Activated CD4-positive, alpha-beta T cell treated with anti-CD3 and anti-CD28 coated beads, Interleukin-2, amount 10 ng/mL, durations not matched to agents 24 days and 14 days (primary cell): ENCODE measurements at regions of chr4 and their contacts with region 1.

Region 1: GRCh38 chr4:76504613-76505465 is 69.8 kb downstream of the SHROOM3 start:
- DNase-seq: peak; percentile 59
- H3K4me3 Mint-ChIP-seq: no peak overlapping the region
- H3K27ac Mint-ChIP-seq: no peak overlapping the region
- H3K4me1 Mint-ChIP-seq: no peaks in the 10 kb centered on the region
- H3K27me3 Mint-ChIP-seq: peaks cover 12% of the 10 kb centered on the region

Region 2: GRCh38 chr4:76179398-76180318 is 325.2 kb before region 1 on chr4:
- intact Hi-C with region 1: loop called (anchors 1 kb)
- DNase-seq: peak; percentile 93
- H3K4me3 Mint-ChIP-seq: no peak overlapping the region
- H3K27ac Mint-ChIP-seq: no peak overlapping the region
- H3K4me1 Mint-ChIP-seq: no peaks in the 10 kb centered on the region
- H3K27me3 Mint-ChIP-seq: no peaks in the 10 kb centered on the region

Region 3: DNA sequence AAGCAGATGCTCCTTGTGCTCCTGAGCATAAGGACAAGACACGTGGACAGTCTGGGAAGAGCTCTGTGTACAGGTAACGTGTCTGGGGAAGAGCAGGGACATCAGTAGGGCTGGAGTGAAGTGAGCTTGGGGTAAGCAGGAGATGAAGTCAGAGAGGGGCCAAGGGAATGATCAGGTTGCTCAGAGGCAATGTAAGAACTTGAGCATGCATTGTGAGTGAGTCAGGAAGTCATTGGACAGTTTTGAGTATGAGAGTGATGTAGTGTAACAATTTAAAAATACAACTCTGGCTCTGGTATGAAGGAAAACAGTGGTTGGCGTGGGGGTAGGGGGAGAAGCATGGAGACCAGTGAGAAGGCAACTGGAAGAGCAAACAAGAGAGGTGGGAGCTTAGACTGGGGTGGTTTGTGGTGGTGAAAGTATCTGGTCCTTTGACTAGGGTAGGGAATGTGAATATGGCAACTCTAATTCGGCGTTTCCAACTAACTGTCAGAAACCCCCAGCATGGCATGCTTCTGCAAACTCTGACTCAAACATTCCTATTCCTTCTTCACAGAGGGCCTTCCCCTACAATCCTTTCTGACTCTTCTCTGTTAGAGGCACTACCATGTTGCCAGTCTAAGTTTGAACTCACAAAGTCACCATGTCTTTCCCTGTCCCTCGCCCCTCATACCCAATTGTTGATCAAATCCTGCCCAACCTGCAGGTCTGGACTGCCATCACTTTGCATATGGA is 141.1 kb before region 1 on chr4:
- intact Hi-C with region 1: no loop called
- DNase-seq: no peak
- H3K4me3 Mint-ChIP-seq: no peak overlapping the region
- H3K27ac Mint-ChIP-seq: no peak overlapping the region
- H3K4me1 Mint-ChIP-seq: peaks cover 2% of the 10 kb centered on the region
- H3K27me3 Mint-ChIP-seq: peaks cover 15% of the 10 kb centered on the region

Region 4: DNA sequence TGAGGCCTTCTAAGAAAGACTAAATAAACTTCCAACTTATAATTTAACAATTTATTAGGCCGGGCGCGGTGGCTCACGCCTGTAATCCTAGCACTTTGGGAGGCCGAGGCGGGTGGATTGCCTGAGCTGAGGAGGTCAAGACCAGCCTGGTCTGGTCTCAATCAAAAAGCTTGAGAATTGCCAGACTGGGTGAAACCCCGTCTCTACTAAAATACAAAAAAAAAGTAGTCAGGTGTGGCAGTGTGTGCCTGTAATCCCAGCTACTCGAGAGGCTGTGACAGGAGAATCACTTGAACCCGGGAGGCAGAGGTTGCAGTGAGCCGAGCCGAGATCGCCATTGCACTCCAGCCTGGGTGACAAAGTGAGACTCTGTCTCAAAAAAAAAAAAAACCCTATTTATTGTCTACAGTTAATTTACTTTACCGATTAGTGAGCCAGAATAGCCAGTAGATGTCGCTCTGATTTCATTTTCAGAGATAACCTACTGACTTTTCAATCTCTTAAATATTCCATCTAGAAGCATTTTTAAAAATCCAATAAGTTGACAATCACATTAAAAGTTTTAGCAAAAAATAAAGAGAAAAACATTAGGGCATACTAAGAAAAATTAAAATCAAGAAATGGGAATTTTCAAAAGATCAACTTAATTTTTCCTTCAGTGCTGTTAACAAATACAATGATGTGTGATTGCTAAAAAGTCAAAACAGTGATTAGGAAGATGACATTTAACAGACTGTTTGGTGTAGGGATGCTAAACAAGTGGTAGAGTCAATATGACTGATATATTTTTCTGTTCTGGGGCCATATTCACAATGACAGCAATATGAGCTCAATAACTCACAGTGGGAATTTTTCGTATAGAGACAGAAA is 74.1 kb before region 1 on chr4:
- intact Hi-C with region 1: loop called (anchors 1 kb)
- DNase-seq: peak; percentile 62
- H3K4me3 Mint-ChIP-seq: no peak overlapping the region
- H3K27ac Mint-ChIP-seq: no peak overlapping the region
- H3K4me1 Mint-ChIP-seq: no peaks in the 10 kb centered on the region
- H3K27me3 Mint-ChIP-seq: peaks cover 33% of the 10 kb centered on the region